ENCODE measurements at regions of chrX and their contacts with region 1.

Region 1: DNA sequence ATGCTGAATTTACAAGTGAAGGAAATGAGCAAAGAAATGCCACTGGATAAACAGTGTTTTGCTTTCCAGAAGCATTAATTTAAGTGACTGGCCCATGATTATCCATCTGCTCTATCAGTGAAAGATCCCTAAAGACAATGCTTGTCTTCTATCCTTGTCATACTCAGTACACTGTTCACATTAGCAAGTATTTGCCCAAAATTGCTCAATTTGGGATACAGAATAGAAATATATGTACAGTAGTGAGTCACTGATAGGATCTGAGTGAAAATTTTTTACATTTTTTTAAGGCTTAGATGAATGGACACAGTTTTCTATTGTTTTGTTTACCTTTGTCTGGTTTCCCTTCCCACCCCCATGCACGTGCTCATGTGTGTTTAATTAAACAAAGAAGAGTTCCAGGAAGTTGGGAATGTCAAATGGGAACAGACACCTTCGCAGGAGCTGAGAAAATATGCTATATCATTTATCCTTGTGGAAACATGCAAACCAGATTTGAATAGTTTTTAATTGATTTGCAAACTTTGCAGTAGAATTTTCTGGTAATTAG is 656.3 kb downstream of the RPA4 start:
- DNase-seq: no peak
- H3K4me3 ChIP-seq: no peak overlapping the region
- H3K27ac ChIP-seq: no peak overlapping the region
- H3K4me1 ChIP-seq: no peaks in the 10 kb centered on the region
- H3K27me3 ChIP-seq: no peaks in the 10 kb centered on the region
- CTCF ChIP-seq: no peak
- EP300 ChIP-seq: no peak
- POLR2A ChIP-seq: no peak

Region 2: DNA sequence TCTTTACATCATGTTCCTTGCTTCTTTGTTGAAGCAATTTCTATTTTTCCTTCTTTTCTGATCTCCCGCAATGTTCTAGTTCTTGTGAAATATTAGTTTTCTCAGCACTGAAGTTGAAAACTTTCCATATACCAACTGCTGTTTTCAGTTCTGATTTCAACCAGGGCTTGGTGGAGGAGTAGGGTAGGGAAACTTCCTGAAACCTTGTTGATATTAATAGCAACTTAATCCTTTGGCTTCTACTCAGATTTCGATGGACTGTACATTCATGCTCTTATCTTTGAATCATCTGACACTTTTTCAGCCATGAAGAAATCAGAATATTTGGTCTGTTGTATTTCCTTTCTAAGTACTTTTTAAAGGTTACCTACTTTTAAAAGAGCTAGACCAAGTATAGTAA is 340.5 kb before region 1 on chrX:
- intact Hi-C with region 1: no loop called
- DNase-seq: no peak
- H3K4me3 ChIP-seq: no peak overlapping the region
- H3K27ac ChIP-seq: no peak overlapping the region
- H3K4me1 ChIP-seq: no peaks in the 10 kb centered on the region
- H3K27me3 ChIP-seq: no peaks in the 10 kb centered on the region
- CTCF ChIP-seq: no peak
- EP300 ChIP-seq: no peak
- POLR2A ChIP-seq: no peak

Region 3: GRCh38 chrX:97563531-97564133 is 23.6 kb after region 1 on chrX:
- intact Hi-C with region 1: no loop called
- DNase-seq: peak; percentile 24 to 46 (median 28)
- H3K4me3 ChIP-seq: peak overlapping the region; percentile 10
- H3K27ac ChIP-seq: peak overlapping the region in 1 of 2 donors; percentile 43
- H3K4me1 ChIP-seq: peaks cover 5% of the 10 kb centered on the region
- H3K27me3 ChIP-seq: no peaks in the 10 kb centered on the region
- CTCF ChIP-seq: no peak
- EP300 ChIP-seq: no peak
- POLR2A ChIP-seq: no peak

Region 4: GRCh38 chrX:97743014-97743413 is 203.0 kb after region 1 on chrX:
- intact Hi-C with region 1: no loop called
- DNase-seq: no peak
- H3K4me3 ChIP-seq: no peak overlapping the region
- H3K27ac ChIP-seq: no peak overlapping the region
- H3K4me1 ChIP-seq: no peaks in the 10 kb centered on the region
- H3K27me3 ChIP-seq: no peaks in the 10 kb centered on the region
- CTCF ChIP-seq: no peak
- EP300 ChIP-seq: no peak
- POLR2A ChIP-seq: no peak

Region 5: GRCh38 chrX:99348256-99348655 is 1808.2 kb after region 1 on chrX:
- intact Hi-C with region 1: loop called in 1 of 4 experiments (anchors 5 kb)
- DNase-seq: no peak
- H3K4me3 ChIP-seq: no peak overlapping the region
- H3K27ac ChIP-seq: no peak overlapping the region
- H3K4me1 ChIP-seq: no peaks in the 10 kb centered on the region
- H3K27me3 ChIP-seq: no peaks in the 10 kb centered on the region
- CTCF ChIP-seq: no peak
- EP300 ChIP-seq: no peak
- POLR2A ChIP-seq: no peak

Measured in ovary (tissue), 10 donors.